Naive thymus-derived CD4-positive, alpha-beta T cell (primary cell): ENCODE measurements at regions of chr17 and their contacts with region 1.

Region 1: DNA sequence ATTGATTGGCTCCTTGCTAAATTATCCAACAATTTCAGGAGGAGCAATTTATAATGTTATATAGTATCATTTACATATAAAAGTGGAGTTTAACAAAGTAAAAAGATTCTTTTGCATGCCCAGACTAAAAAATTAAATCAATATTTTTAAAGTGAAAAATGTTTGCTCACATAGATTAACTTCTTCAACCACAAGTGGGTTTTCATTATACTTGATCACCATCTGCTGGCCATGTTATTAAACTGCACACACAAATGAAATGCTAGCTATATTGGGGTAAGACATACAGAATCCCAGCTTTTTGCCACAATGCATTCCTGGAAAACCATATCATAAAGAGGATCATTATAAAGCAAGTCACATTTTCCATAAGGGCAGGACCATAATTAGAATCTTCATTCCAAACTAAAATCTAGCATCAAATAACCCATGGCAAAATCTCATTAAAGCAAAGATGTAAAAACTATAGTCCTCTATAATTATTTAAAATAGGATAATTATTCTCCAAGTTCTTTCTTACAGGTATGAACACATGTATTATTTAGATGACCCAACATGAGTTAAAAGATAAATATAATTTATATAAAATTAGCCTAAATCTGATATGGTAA is 26.3 kb downstream of the CEP112 start:
- DNase-seq: peak in 7 of 9 donors; percentile 23 to 58 (median 53)
- ATAC-seq: peak; percentile 57
- H3K4me3 ChIP-seq: no peak overlapping the region
- H3K4me3 Mint-ChIP-seq: no peak overlapping the region
- H3K27ac ChIP-seq: no peak overlapping the region
- H3K27ac Mint-ChIP-seq: no peak overlapping the region
- H3K4me1 ChIP-seq: no peaks in the 10 kb centered on the region
- H3K4me1 Mint-ChIP-seq: no peaks in the 10 kb centered on the region
- H3K27me3 ChIP-seq: no peaks in the 10 kb centered on the region
- H3K27me3 Mint-ChIP-seq: no peaks in the 10 kb centered on the region

Region 2: GRCh38 chr17:65278050-65278819 is 887.4 kb before region 1 on chr17:
- CTCF ChIA-PET with region 1: interaction called, 3 read pairs
- POLR2A ChIA-PET with region 1: no interaction called
- intact Hi-C with region 1: loop called (anchors 1 kb)
- DNase-seq: peak in 4 of 9 donors; percentile 9 to 24 (median 11)
- ATAC-seq: no peak
- H3K4me3 ChIP-seq: no peak overlapping the region
- H3K4me3 Mint-ChIP-seq: no peak overlapping the region
- H3K27ac ChIP-seq: no peak overlapping the region
- H3K27ac Mint-ChIP-seq: no peak overlapping the region
- H3K4me1 ChIP-seq: no peaks in the 10 kb centered on the region
- H3K4me1 Mint-ChIP-seq: peaks cover 7 to 13% (median 10%) of the 10 kb centered on the region in 7 donors
- H3K27me3 ChIP-seq: no peaks in the 10 kb centered on the region
- H3K27me3 Mint-ChIP-seq: peaks cover 5 to 35% (median 11%) of the 10 kb centered on the region in 5 donors

Region 3: DNA sequence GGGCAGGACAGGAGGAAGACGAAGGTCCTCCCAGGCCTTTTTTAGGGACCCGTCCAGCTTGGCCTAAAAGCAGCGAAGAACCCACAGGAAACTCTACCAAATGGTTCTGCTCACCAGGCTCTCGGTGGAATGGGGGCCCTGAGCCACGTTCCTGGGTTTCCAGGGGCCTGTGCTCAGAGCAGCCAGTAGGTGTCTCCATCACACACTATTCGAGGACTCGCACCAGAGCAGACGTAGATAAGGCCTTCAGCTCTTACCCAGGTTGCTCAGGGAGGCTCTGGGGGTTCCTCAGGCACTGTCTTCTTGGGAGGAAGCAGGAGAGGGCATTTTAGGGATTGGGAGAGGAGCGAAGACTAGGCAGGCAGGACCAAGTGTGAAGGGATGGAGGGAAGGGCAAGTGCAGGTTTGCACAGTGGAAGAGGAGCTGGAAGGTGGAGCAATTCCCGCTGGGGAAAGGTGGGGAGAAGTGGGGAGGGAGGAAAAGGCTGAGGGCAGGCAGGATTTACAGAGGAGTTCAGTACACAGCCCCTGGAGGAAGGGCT is 871.4 kb before region 1 on chr17:
- CTCF ChIA-PET with region 1: interaction called, 35 read pairs
- POLR2A ChIA-PET with region 1: no interaction called
- intact Hi-C with region 1: loop called (anchors 1 kb)
- DNase-seq: peak; percentile 15 to 70 (median 60)
- ATAC-seq: peak; percentile 86
- H3K4me3 ChIP-seq: no peak overlapping the region
- H3K4me3 Mint-ChIP-seq: no peak overlapping the region
- H3K27ac ChIP-seq: no peak overlapping the region
- H3K27ac Mint-ChIP-seq: peak overlapping the region in 1 of 9 donors; percentile 80
- H3K4me1 ChIP-seq: no peaks in the 10 kb centered on the region
- H3K4me1 Mint-ChIP-seq: peaks cover 0 to 5% (median 5%) of the 10 kb centered on the region in 7 donors
- H3K27me3 ChIP-seq: no peaks in the 10 kb centered on the region
- H3K27me3 Mint-ChIP-seq: peaks cover 0 to 18% (median 0%) of the 10 kb centered on the region in 5 donors

Region 4: GRCh38 chr17:65418628-65419027 is 747.0 kb before region 1 on chr17:
- CTCF ChIA-PET with region 1: no interaction called
- POLR2A ChIA-PET with region 1: no interaction called
- intact Hi-C with region 1: loop called in 1 of 2 experiments (anchors 1 kb)
- DNase-seq: no peak
- ATAC-seq: no peak
- H3K4me3 ChIP-seq: no peak overlapping the region
- H3K4me3 Mint-ChIP-seq: no peak overlapping the region
- H3K27ac ChIP-seq: no peak overlapping the region
- H3K27ac Mint-ChIP-seq: no peak overlapping the region
- H3K4me1 ChIP-seq: no peaks in the 10 kb centered on the region
- H3K4me1 Mint-ChIP-seq: no peaks in the 10 kb centered on the region
- H3K27me3 ChIP-seq: no peaks in the 10 kb centered on the region
- H3K27me3 Mint-ChIP-seq: peaks cover 0 to 4% (median 2%) of the 10 kb centered on the region in 5 donors

Region 5: GRCh38 chr17:65455972-65456343 is 709.7 kb before region 1 on chr17:
- CTCF ChIA-PET with region 1: no interaction called
- POLR2A ChIA-PET with region 1: no interaction called
- intact Hi-C with region 1: loop called (anchors 1 to 5 kb)
- DNase-seq: peak in 7 of 9 donors; percentile 28 to 63 (median 48)
- ATAC-seq: peak; percentile 60
- H3K4me3 ChIP-seq: no peak overlapping the region
- H3K4me3 Mint-ChIP-seq: no peak overlapping the region
- H3K27ac ChIP-seq: no peak overlapping the region
- H3K27ac Mint-ChIP-seq: peak overlapping the region in 1 of 9 donors; percentile 22
- H3K4me1 ChIP-seq: no peaks in the 10 kb centered on the region
- H3K4me1 Mint-ChIP-seq: peaks cover 0 to 18% (median 5%) of the 10 kb centered on the region in 7 donors
- H3K27me3 ChIP-seq: no peaks in the 10 kb centered on the region
- H3K27me3 Mint-ChIP-seq: peaks cover 0 to 18% (median 0%) of the 10 kb centered on the region in 5 donors

Region 6: DNA sequence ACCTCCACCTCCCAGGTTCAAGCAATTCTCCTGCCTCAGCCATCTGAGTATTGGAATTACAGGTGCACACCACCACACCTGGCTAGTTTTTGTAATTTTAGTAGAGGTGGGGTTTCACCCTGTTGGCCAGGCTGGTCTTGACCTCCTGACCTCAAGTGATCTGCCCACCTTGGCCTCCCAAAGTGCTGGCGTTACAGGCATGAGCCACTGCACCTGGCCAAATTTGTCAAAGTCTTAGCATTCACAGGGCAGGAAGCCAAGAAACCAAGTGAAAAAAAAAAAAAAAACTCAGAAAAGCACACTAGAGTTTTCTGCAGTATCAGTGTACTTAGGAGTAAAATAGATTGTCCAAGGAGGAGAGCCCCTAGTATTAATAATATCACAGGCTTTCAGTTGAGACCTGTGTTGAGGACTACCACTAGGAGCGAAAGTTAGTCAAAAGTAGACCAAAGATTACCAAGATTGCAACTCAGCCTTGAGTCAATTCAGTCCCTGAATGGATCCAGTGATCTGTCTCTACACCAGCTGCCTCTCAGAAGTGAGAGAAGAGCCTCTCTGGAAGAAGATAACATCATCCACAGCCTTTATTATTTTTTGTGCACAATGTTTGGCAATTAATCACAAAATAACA is 133.4 kb before region 1 on chr17:
- CTCF ChIA-PET with region 1: no interaction called
- POLR2A ChIA-PET with region 1: no interaction called
- intact Hi-C with region 1: loop called in 1 of 2 experiments (anchors 10 kb)
- DNase-seq: no peak
- ATAC-seq: no peak
- H3K4me3 ChIP-seq: no peak overlapping the region
- H3K4me3 Mint-ChIP-seq: no peak overlapping the region
- H3K27ac ChIP-seq: no peak overlapping the region
- H3K27ac Mint-ChIP-seq: no peak overlapping the region
- H3K4me1 ChIP-seq: no peaks in the 10 kb centered on the region
- H3K4me1 Mint-ChIP-seq: peaks cover 0 to 1% (median 0%) of the 10 kb centered on the region in 7 donors
- H3K27me3 ChIP-seq: no peaks in the 10 kb centered on the region
- H3K27me3 Mint-ChIP-seq: peaks cover 0 to 11% (median under 1%) of the 10 kb centered on the region in 5 donors

Region 7: GRCh38 chr17:66290101-66290722 is 124.6 kb after region 1 on chr17:
- CTCF ChIA-PET with region 1: no interaction called
- POLR2A ChIA-PET with region 1: no interaction called
- intact Hi-C with region 1: no loop called
- DNase-seq: no peak
- ATAC-seq: no peak
- H3K4me3 ChIP-seq: no peak overlapping the region
- H3K4me3 Mint-ChIP-seq: peak overlapping the region in 2 of 10 donors; percentile 11 to 59
- H3K27ac ChIP-seq: no peak overlapping the region
- H3K27ac Mint-ChIP-seq: peak overlapping the region in 1 of 9 donors; percentile 63
- H3K4me1 ChIP-seq: peaks cover 6 to 30% of the 10 kb centered on the region in 2 donors
- H3K4me1 Mint-ChIP-seq: peaks cover 18 to 51% (median 34%) of the 10 kb centered on the region in 7 donors
- H3K27me3 ChIP-seq: no peaks in the 10 kb centered on the region
- H3K27me3 Mint-ChIP-seq: no peaks in the 10 kb centered on the region